ENCODE measurements at regions of chr4 and their contacts with region 1.

Region 1: GRCh38 chr4:54961357-54961975 is 163.9 kb downstream of the KDR start:
- DNase-seq: no peak
- H3K4me3 Mint-ChIP-seq: no peak overlapping the region
- H3K27ac Mint-ChIP-seq: no peak overlapping the region
- H3K4me1 Mint-ChIP-seq: peaks cover 16% of the 10 kb centered on the region
- H3K27me3 Mint-ChIP-seq: no peaks in the 10 kb centered on the region

Region 2: DNA sequence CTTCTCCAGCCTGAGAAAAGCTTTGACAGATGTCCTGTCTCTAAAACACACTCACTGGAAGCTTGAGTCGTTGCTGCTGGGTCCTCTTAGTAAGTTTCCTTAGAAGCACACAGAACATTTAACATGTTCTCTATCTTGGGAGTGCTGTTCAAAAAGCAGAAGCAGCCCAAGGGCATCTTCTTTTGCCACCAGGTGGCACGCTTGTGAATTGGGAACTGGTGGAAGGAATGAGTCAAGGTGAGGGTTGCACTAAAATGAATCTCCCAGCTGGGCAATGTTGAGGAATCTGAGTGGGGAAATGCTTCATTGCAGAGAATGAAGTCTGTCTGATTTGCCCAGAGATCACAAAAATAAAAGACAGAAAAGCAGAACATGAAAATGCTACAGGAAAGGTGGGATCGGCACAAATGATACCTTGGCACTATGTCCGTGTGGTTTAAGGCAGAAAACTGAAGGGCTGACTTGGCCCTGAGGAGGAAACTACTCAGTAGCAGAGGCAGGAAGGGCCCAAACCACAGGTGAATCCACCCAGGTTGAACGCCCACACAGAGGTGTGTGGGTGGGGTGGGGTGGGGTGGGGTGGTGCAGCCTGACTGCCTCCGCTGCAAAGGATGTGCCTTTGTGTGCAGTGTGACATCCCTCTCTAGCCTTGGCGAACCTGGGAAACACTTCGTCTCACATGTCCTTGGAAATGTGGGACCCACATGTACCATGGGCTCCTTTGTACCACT is 277.7 kb before region 1 on chr4:
- CTCF ChIA-PET with region 1: interaction called, 3 read pairs
- POLR2A ChIA-PET with region 1: no interaction called
- intact Hi-C with region 1: loop called (anchors 1 kb)
- DNase-seq: peak; percentile 70
- H3K4me3 Mint-ChIP-seq: no peak overlapping the region
- H3K27ac Mint-ChIP-seq: no peak overlapping the region
- H3K4me1 Mint-ChIP-seq: peaks cover 15% of the 10 kb centered on the region
- H3K27me3 Mint-ChIP-seq: no peaks in the 10 kb centered on the region